Astrocyte of the cerebellum (primary cell): ENCODE measurements at regions of chrX and their contacts with region 1.

Region 1: GRCh38 chrX:48703642-48704481 is 7.3 kb downstream of the SUV39H1 start:
- DNase-seq: no peak
- H3K4me3 ChIP-seq: no peak overlapping the region
- CTCF ChIP-seq: no peak

Region 2: DNA sequence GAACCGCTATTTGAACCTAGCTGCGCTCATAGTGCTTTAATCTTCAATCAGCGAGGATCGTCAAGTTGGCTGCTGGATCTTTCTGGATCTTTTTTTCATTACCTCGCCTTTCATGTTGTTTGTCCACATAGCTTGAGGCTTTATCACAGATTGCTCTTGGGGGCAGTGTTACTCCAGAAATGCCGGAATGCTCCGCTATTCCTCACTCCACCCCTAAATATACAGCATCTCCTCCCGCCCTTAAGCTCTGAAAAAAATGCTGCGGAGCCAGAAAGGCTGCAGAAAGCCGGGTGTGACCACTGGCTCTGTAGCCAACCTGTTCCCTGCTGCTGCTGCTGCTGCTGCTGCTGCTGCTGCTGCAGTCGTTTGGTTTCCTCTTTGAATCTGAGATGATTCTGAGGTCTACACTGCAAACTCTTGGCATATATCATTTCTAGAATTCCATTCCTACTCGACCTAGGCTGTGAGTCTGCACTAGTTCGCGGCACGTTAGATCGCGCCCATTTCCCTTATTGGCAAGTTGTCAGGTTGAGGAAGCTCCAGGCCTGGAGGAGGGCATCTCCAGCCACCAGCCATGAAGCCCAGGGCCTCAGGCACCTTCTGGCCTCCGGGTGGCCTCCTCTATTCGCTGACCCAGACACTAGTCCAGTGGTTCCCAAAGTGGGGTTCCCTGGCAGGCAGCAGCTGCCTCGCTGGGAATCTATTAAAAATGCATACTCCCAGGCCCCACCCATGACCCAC is 72.3 kb before region 1 on chrX:
- in situ Hi-C with region 1: no loop called
- DNase-seq: peak; percentile 87
- H3K4me3 ChIP-seq: no peak overlapping the region
- CTCF ChIP-seq: peak; percentile 55

Region 3: GRCh38 chrX:48761674-48762471 is 58.0 kb after region 1 on chrX and contains the start of gene GLOD5:
- in situ Hi-C with region 1: loop called (anchors 5 kb)
- DNase-seq: no peak
- H3K4me3 ChIP-seq: no peak within 1 kb of the TSS
- CTCF ChIP-seq: no peak